ENCODE measurements at regions of chr7 and their contacts with region 1.

Region 1: DNA sequence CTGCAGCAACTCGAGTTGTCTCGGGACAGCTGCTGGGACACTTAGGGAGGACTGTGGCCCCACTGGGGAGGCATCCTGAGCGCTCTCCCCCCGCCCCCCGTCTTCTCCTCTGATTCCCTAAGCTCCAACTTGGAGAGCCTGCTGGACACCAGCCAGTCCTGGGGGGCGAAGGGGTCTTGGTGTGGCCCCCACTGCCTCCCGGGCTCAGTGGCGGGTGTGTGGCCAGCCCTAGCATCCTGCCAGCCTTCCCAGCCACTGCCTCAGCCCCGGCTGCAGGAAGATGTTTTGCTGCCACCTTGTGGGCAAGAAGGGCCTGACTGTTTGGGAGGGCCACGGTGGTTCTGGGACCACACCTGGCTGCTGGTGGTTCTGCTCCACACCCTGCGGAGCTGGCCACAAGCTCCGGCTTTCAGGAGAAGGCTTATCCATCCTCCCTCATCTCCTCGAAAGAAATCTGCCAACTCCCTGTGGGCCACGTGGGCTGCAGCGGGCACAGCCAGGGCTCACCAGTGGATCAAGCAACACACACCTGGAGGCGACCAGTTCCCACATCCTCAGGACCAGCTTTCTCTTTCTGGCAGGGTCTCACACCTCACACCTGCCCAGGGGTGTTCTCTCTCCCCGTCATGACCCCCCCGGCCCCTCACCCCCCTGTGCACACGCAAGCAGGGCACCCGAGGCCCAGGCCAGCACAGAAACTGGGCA is 24.8 kb downstream of the AGAP3 start:
- DNase-seq: peak; percentile 55
- H3K4me3 Mint-ChIP-seq: no peak overlapping the region
- H3K27ac Mint-ChIP-seq: no peak overlapping the region
- H3K4me1 Mint-ChIP-seq: no peaks in the 10 kb centered on the region
- H3K27me3 Mint-ChIP-seq: peaks cover 17% of the 10 kb centered on the region

Region 2: DNA sequence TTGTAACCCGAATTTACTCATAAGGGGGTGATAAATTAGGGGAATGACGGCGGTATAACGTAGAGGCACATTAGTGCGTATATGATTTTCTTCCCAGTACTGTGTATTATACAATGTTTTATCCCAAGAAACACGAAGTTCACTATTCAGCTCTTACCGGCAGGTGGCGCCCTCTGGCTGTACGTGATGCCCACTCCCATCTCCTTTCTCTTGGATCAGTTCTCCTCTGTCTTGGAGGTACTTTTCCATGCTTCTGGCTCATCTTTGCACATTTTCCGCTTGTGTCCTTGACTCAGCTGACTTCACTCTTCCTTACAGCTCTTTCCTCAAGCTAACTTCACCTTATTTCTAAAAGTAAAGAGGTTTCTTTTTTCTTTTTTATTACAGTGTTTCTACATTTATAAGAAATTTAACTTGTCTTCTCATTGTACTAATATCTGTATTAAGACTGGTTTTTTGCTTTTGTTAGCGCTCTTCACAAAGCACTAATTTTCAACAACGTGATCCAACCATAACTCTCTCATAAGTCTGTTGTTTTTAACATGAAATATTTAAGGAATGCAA is 332.3 kb before region 1 on chr7:
- intact Hi-C with region 1: loop called (anchors 1 kb)
- DNase-seq: peak; percentile 54
- H3K4me3 Mint-ChIP-seq: no peak overlapping the region
- H3K27ac Mint-ChIP-seq: no peak overlapping the region
- H3K4me1 Mint-ChIP-seq: peaks cover 9% of the 10 kb centered on the region
- H3K27me3 Mint-ChIP-seq: peaks cover 29% of the 10 kb centered on the region

Region 3: DNA sequence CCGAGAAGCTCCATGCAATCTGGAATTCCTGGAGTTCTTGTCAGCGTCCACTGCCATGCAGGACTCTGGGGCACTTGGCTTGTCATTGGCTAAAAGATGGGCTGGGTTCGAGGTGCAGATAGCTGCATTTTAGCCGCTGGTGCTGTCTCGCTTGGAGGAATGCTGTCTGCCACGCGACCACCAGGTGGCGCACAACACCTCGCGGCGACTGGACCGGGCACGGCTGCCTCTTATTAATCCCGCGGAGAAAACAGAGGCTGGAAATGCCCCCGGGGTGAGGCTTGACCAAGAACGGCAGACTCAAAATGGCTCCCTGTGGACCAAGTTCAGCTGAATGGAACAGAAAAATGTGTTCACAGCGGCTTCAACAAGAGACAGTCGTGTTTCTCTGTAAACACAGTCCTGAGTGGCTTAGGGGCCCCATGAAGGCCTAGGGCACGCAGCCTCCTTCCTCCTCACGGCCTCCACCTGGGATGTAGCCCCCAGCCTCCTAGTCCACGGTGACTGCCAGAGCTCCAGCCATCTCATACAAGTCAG is 212.6 kb before region 1 on chr7:
- intact Hi-C with region 1: loop called (anchors 1 kb)
- DNase-seq: peak; percentile 56
- H3K4me3 Mint-ChIP-seq: no peak overlapping the region
- H3K27ac Mint-ChIP-seq: no peak overlapping the region
- H3K4me1 Mint-ChIP-seq: peaks cover 6% of the 10 kb centered on the region
- H3K27me3 Mint-ChIP-seq: peaks cover 33% of the 10 kb centered on the region

Region 4: DNA sequence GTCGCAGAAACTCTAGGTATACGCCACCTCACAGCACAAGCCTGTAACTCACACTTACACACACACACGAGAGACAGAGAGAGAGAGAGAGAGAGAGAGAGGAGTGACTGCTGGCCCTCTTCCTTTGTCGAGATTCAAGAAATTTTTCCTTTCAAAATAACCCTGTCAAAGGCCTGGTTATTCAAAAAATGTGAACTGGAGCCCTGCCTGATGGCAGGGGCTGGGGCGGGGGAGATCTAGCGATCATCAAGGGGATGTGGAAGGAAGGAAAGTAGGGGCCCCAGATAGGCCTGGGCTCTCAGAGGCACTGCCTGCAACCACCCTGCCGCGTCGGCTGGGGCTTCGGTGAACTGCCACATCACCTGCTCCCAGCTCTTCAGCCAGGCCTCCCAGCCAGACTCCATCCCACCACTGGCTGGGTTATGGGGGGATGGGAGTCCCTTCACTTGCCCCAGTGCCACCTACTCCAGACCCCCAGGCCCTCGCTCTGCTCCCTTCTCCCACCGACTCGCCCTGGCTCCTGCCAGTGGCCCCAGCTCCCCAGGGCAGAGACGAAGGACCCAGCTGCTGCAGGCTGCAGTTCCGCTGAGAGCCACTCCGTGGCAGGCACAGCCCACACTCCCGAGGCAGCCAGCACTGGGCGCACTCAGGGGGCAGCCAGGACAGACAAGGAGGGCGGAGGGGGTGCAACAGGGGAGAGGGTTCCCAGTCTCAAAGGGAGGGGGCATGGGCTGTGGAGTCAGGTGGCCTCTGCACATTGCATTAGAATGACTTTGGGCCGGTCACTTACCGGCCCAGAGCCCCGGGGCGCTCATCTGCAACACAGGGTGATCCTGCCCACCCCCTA is 148.3 kb before region 1 on chr7:
- intact Hi-C with region 1: loop called (anchors 1 kb)
- DNase-seq: peak; percentile 39
- H3K4me3 Mint-ChIP-seq: no peak overlapping the region
- H3K27ac Mint-ChIP-seq: no peak overlapping the region
- H3K4me1 Mint-ChIP-seq: no peaks in the 10 kb centered on the region
- H3K27me3 Mint-ChIP-seq: peaks cover 28% of the 10 kb centered on the region

Region 5: GRCh38 chr7:151028131-151028947 is 82.8 kb before region 1 on chr7 and contains the start of gene ABCB8:
- intact Hi-C with region 1: loop called (anchors 2 kb)
- DNase-seq: peak; percentile 98
- H3K4me3 Mint-ChIP-seq: peak within 1 kb of the TSS; percentile 94
- H3K27ac Mint-ChIP-seq: peak within 1 kb of the TSS; percentile 95
- H3K4me1 Mint-ChIP-seq: peaks cover 21% of the 10 kb centered on the region
- H3K27me3 Mint-ChIP-seq: peaks cover 2% of the 10 kb centered on the region
- total RNA-seq, gene ABCB8: 56.9 and 57.9 TPM in 2 replicates

Region 6: DNA sequence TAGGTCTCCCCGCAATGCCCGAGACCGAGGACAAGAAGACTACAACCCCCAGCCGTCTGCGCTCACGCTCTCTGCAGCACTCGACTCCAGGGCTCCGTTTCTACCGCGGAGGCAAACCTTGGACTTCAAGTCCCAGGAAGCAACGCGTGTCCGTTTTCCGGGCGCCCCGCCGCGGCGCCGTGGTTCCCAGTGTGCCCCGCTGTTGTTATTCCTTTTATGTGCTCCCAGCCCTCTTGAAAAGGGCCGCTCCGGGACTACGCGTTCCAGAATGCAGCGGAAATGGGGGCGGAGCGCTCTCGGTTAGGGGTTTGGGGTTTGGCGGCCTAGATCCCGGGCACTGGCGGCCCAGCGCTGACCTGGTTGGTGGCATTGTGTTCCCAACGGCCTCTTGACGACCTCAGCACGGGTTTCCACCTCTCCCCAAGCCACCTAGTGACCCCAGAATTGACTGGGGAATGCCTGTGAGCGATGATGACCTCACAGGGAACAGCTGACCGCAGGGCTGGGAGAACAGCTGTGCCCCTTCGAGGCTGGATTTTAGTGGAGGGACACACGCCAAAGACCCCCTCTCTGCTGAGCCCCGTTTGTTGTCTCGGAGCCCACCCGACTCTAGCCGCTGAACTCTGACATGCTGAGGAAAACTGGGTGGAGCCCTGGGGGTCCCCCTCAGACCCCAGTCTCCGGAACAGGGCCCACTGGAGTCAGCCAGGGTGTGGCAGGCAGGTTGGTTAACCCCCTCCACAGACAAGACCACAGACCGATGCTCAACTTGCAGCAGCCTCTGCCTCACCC is 52.9 kb before region 1 on chr7:
- intact Hi-C with region 1: loop called (anchors 1 kb)
- DNase-seq: peak; percentile 95
- H3K4me3 Mint-ChIP-seq: peak overlapping the region; percentile 93
- H3K27ac Mint-ChIP-seq: peak overlapping the region; percentile 92
- H3K4me1 Mint-ChIP-seq: peaks cover 46% of the 10 kb centered on the region
- H3K27me3 Mint-ChIP-seq: no peaks in the 10 kb centered on the region

Region 7: DNA sequence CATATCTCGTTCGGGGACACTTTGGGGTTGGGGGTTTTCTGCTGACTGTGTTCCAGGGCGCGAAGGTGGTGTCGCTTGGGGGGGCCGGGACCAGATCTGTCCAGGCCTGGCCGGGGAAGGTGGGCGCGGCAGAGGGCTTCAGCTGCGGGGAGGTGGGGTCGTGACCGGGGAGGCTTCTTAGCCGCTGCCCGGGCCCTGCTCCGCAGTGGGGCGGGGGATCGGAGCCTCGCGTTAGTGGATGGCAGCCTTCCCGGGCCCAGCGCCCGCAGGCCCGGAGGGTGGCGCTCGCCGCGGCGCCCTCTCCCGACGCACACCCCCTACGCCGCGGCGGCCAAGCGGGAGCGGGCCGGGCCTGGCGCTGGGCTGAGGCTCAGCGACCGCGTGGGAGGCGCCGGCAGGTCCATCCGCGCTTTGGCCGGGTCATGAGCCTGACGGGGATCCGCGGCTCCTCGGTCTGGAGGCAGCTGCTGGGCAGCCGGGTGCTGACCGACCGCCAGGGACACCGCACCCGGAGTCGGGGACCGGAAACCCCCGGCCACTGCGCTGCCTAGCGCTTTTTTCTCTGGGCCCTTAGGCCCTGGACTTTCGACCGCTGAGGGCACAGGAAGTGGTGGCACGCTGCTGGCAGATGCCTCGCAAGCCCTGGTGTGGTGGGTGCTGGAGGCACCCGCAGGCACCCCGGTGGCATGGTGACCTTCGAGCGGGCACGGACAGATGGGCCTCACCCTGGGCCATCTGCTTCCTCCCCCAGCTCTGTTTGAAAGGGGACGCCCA is 23.7 kb before region 1 on chr7:
- intact Hi-C with region 1: loop called (anchors 1 kb)
- DNase-seq: no peak
- H3K4me3 Mint-ChIP-seq: peak overlapping the region; percentile 88
- H3K27ac Mint-ChIP-seq: peak overlapping the region; percentile 84
- H3K4me1 Mint-ChIP-seq: peaks cover 41% of the 10 kb centered on the region
- H3K27me3 Mint-ChIP-seq: peaks cover 20% of the 10 kb centered on the region

Measured in activated T-helper 1 cell treated with anti-CD3 and anti-CD28 coated beads, Interleukin-12 subunit alpha, Interleukin-12 subunit beta, Interleukin-2, Interleukin-4 antibody, amounts not matched to agents 30 ng/mL and 10 ng/mL and 1 ng/mL, durations not matched to agents 14 hours and 24 hours and 36 hours (primary cell).